H1 (cell line): ENCODE measurements at regions of chr15 and their contacts with region 1.

Region 1: DNA sequence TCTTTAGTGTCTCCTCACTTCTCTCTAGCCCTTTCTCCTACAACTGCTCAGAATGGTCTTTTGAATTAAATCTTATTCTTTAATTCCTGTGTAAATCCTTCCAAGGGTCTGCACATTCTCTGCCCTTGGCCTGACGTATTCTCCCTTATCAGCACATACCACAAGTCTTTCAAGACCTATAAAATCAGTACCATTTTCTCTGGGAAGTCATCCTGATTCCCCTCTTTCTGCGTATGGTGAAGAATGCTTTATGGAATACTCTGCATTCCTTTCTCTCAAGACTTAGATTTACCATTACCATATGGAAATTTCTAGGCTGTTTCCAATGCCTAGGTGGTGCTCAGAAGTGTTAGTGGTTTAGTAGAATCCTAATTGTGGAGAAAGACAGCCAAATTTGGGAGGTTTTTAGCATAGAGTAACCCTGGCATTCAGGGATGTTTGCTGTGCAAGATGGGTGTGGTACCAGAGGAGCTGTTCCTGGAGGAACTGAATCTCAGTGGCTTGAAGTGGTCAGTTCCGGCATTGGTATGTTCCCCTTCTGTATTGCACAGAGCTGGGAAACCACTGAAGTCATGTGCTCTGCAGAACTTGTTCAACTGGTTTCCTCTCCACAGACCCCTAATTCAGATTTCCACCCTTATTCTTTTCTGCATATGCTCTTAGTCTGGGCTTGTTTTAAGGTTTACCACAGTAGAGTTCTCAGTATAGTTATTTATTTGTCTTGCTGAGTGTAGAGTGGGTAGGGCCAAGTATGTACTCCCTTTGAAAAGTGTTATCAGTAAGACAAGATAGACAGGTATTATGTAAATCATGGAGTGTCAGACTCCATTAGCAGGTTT is 24.5 kb downstream of the IQGAP1 start:
- DNase-seq: no peak
- H3K4me3 ChIP-seq: peak overlapping the region in 3 of 4 experiments; percentile 22 to 42 (median 23); a peak in 5 of 8 replicates
- H3K27ac ChIP-seq: peak overlapping the region; percentile 69
- H3K4me1 ChIP-seq: peaks cover 18 to 30% (median 22%) of the 10 kb centered on the region in 4 experiments
- H3K27me3 ChIP-seq: no peaks in the 10 kb centered on the region
- CTCF ChIP-seq: no peak
- EP300 ChIP-seq: no peak
- POLR2A ChIP-seq: peak in 1 of 2 experiments; percentile 42; a peak in 1 of 3 replicates
- RAD21 ChIP-seq: no peak

Region 2: DNA sequence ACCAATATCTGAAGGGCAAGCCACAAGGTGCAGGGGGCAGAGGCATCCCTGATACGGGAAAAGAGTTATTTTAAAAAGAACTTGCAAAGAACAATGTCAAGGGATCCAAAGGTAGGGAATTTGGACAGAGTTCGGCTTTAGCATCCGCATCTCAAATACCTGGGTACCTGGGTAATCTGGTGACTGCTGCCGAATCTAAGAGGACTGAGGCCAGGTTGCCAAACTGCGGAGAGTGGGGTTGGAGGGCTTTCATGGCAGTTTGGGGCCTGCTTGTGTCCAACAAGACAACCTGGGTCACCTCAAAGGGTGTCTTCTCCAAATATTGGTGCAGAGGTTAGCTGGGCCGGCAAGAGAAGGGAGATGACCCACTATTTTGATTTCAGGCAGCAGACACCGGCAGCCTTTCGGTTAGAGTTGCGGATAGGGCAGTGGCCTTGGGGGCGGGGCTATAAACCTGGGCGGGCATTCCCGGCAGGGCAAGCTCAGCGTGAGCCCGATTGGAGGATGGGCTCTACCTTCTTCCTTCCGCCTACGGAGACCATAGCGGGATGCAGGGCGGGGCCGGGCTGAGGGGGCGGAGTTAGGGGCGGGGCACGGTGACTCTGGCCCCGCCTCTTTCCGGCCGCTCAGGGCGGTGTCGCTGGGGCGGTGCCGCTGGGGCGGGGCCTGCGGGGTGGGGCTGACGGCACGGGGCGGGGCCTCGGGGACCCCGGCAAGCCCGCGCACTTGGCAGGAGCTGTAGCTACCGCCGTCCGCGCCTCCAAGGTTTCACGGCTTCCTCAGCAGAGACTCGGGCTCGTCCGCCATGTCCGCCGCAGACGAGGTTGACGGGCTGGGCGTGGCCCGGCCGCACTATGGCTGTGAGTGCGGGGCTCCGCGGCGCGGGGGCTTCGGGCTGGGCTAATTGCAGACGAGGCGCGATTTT is 24.8 kb before region 1 on chr15 and contains the start of gene IQGAP1:
- CTCF ChIA-PET with region 1: interaction called, 3 read pairs
- POLR2A ChIA-PET with region 1: interaction called, 25 read pairs
- DNase-seq: peak; percentile 88 to 97
- H3K4me3 ChIP-seq: peak within 1 kb of the TSS; percentile 55 to 88 (median 84)
- H3K27ac ChIP-seq: peak within 1 kb of the TSS; percentile 62; the same call in 1 of the 2 replicates
- H3K4me1 ChIP-seq: peaks cover 5 to 17% (median 11%) of the 10 kb centered on the region in 4 experiments
- H3K27me3 ChIP-seq: no peaks in the 10 kb centered on the region
- CTCF ChIP-seq: no peak; a peak in 1 of 4 replicates
- EP300 ChIP-seq: 0 out of 3 replicates have a peak, but pooled peaks of 1 of the 2 experiments have one; percentile 56
- POLR2A ChIP-seq: peak; percentile 65 to 73
- RAD21 ChIP-seq: peak; percentile 2 to 7; a peak in 2 of 4 replicates
- total RNA-seq, gene IQGAP1: 133 and 138 TPM in 2 replicates

Region 3: GRCh38 chr15:90394748-90395442 is 17.7 kb before region 1 on chr15:
- CTCF ChIA-PET with region 1: interaction called, 5 read pairs
- POLR2A ChIA-PET with region 1: interaction called, 25 read pairs
- DNase-seq: no peak
- H3K4me3 ChIP-seq: no peak overlapping the region; a peak in 1 of 8 replicates
- H3K27ac ChIP-seq: no peak overlapping the region
- H3K4me1 ChIP-seq: peaks cover 9 to 32% (median 26%) of the 10 kb centered on the region in 4 experiments
- H3K27me3 ChIP-seq: no peaks in the 10 kb centered on the region
- CTCF ChIP-seq: no peak
- EP300 ChIP-seq: no peak
- POLR2A ChIP-seq: no peak
- RAD21 ChIP-seq: no peak

Region 4: DNA sequence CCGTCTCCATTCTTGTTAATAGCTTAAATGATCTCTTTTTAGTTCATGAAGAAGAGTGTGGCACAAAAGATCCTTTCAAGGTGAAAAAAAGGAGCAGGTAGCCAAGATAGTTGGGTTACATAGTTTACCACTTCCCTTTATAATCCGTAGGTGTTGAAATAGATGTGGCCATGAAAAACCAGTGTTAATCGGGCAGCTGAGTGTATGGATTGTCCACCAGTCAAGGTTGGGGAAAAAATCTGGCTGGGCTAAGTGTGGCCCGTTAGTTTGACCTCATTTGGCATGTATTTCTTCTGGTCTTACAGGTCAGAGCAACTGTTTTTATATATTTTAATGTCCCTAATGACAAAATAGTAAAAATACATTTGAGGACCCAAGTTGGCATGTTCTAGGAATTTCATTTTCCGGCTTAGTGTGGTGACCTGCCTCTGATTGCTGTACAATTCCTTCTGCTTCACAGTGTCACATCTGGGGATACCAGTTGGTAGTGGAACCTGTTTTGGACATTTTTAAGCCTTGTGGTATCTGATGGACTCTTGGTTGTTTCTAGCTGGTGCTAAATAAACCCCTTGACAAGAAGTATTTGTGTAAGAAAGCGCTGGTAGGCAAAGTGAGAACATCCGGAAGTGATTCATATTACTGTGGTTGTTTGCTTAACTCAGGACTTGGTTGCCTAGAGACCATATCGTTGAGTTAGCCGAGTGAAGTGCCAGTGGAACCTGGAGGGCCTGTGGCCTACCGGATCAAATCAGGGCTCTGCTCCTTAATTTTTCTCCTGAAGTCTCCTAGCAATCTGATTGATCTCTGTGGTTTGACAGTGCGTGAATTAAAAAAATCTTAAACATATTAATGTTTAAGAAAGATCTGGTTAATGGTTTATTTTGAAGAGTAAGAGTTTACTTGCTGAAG is 11.9 kb before region 1 on chr15:
- CTCF ChIA-PET with region 1: interaction called, 3 read pairs
- POLR2A ChIA-PET with region 1: interaction called, 25 read pairs
- DNase-seq: no peak
- H3K4me3 ChIP-seq: peak overlapping the region in 2 of 4 experiments; percentile 15 to 31; a peak in 3 of 8 replicates
- H3K27ac ChIP-seq: peak overlapping the region; percentile 51
- H3K4me1 ChIP-seq: peaks cover 10 to 20% (median 15%) of the 10 kb centered on the region in 4 experiments
- H3K27me3 ChIP-seq: no peaks in the 10 kb centered on the region
- CTCF ChIP-seq: no peak
- EP300 ChIP-seq: peak in 1 of 2 experiments; percentile 72; a peak in 1 of 3 replicates
- POLR2A ChIP-seq: peak; percentile 27 to 45; a peak in 2 of 3 replicates
- RAD21 ChIP-seq: no peak

Region 5: GRCh38 chr15:90436952-90437351 is 24.4 kb after region 1 on chr15:
- CTCF ChIA-PET with region 1: no interaction called
- POLR2A ChIA-PET with region 1: no interaction called
- DNase-seq: no peak
- H3K4me3 ChIP-seq: no peak overlapping the region
- H3K27ac ChIP-seq: no peak overlapping the region
- H3K4me1 ChIP-seq: no peaks in the 10 kb centered on the region
- H3K27me3 ChIP-seq: no peaks in the 10 kb centered on the region
- CTCF ChIP-seq: no peak
- EP300 ChIP-seq: no peak
- POLR2A ChIP-seq: no peak
- RAD21 ChIP-seq: no peak